ENCODE measurements at regions of chr1 and their contacts with region 1.

Region 1: GRCh38 chr1:202981939-202982338 is 14.9 kb upstream of the CYB5R1 start:
- DNase-seq: no peak
- H3K4me3 Mint-ChIP-seq: no peak overlapping the region
- H3K27ac Mint-ChIP-seq: no peak overlapping the region
- H3K4me1 Mint-ChIP-seq: peaks cover 1% of the 10 kb centered on the region
- H3K27me3 Mint-ChIP-seq: peaks cover 50% of the 10 kb centered on the region
- CTCF ChIP-seq: no peak

Region 2: DNA sequence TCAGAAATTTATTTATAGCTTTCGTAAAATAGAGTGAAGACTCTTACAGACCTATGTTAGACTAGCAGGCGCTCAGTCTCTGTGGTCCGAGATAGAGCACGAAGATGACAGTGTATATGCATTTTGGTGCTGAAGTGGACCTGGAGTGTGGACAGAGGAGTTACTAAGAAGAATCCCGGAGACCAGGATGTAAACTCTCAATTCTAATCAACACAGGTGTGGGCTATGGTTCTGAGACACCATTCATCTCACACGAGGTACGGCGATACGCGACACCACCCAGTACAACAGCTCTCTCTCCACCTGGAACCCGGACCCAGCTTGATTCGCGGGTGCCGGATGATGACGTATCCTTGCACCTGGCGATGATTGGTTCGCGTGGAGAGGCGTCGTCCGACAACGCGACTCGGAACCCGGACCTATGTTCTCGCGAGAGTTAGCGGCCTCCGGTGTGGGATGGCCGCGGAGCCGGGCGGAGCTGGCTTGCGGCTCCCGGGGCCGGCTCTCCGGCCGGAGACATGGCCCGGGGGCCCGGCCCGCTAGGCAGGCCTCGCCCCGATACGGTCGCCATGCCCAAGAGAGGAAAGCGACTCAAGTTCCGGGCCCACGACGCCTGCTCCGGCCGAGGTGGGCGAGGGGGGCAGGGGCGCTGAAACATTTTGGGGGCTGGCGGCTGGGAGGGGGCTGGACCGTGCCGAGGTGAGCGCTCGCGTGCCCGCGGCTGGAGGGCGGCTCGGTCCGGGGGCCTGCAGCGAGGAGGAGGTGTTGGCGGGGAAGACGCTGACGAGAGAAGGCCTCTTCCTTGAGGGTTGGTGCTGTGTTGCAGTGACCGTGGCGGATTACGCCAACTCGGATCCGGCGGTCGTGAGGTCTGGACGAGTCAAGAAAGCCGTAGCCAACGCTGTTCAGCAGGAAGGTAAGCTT is 25.3 kb after region 1 on chr1 and contains the start of gene TMEM183A:
- CTCF ChIA-PET with region 1: interaction called, 11 read pairs
- intact Hi-C with region 1: no loop called
- DNase-seq: peak; percentile 98
- H3K4me3 Mint-ChIP-seq: peak within 1 kb of the TSS; percentile 91
- H3K27ac Mint-ChIP-seq: peak within 1 kb of the TSS; percentile 99
- H3K4me1 Mint-ChIP-seq: peaks cover 26% of the 10 kb centered on the region
- H3K27me3 Mint-ChIP-seq: peaks cover 3% of the 10 kb centered on the region
- CTCF ChIP-seq: no peak
- total RNA-seq, gene TMEM183A: 77.7 and 84.4 TPM in 2 replicates

Measured in Calu3 (cell line).